Endothelial cell of umbilical vein (primary cell): ENCODE measurements at regions of chr6 and their contacts with region 1.

Region 1: DNA sequence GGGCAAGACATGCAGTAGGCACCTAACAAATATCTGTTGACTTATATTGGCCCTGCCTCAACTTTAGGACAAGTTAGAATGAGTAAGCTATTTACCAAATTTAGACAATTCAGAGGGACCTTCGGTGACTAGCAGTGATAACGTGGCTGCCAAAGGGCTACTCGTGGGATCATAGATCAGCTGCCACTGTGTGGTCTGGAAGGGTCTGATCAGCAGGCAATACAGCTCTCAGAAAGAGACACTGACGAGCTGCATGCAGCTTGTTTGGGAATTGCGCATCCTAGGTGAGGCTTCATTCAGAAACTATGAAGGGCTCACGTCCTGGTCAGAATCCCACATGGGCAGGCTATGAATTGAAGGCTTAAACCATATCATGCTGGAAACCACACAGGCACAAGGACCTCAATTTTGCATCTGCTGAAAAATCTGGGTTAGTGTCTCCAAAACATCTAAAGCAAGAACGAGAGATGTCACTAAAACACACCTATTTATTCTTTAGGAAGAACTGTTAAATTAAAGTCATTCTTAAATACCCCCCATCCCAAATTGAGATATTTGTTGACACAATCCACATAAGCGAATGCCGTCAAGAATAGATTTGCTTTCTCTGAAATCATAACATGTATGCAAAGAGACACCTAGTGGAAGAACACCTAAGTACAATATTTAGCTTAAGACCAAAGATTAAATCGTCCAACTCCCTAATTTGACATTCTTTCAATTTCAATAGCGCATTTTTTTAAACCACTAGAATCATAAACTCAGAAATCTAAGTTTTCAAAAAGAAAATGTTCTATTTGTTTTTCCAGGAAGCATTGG is 79.6 kb downstream of the IPCEF1 start:
- DNase-seq: peak; percentile 42
- H3K4me3 ChIP-seq: no peak overlapping the region
- H3K27ac ChIP-seq: no peak overlapping the region
- H3K4me1 ChIP-seq: no peaks in the 10 kb centered on the region
- H3K27me3 ChIP-seq: no peaks in the 10 kb centered on the region
- CTCF ChIP-seq: peak; percentile 21 to 37
- POLR2A ChIP-seq: no peak

Region 2: DNA sequence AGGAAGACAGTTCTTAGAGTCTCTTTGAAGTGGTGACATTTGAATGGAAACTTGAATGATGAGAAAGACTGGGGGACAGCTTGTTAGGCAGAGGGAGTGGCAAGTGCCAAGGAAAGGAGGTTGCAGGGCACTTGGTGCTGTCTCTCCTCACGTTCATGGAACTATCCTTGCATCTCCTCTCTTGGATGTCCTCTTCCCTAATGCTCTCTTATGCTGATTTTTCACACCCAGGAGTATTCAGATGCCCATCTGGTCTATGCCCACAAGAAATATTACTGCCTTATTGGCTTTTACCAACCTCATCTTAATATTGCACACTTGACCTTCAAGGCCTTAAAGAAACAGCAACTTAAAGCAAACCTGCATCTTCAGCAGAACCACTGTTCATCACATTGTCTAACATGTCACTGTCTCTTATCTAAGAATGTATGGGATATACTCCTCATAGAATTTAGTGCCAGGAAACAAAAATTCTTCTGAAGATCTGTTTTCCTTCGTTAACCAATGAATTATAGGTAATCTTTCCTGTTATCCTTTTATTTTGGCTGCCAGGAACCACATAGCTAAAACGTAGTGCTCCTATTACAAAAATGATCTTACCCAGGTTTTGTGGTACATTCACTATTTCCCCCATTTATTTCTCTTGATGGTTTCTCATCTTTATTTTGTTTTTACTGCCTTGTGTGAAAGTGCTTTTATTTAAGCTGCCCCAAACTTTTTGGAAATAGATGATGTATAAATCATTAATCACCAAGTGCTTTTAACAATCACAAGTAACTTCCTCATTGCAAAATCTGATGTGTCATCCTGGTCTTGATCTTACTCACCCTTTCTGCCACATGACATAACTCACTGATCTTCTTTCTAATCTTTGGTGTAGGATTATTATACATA is 1158.8 kb before region 1 on chr6:
- CTCF ChIA-PET with region 1: no interaction called
- POLR2A ChIA-PET with region 1: no interaction called
- dilution Hi-C with region 1: no loop called
- intact Hi-C with region 1: no loop called
- DNase-seq: no peak
- H3K4me3 ChIP-seq: no peak overlapping the region
- H3K27ac ChIP-seq: no peak overlapping the region
- H3K4me1 ChIP-seq: no peaks in the 10 kb centered on the region
- H3K27me3 ChIP-seq: no peaks in the 10 kb centered on the region
- CTCF ChIP-seq: no peak
- POLR2A ChIP-seq: no peak

Region 3: DNA sequence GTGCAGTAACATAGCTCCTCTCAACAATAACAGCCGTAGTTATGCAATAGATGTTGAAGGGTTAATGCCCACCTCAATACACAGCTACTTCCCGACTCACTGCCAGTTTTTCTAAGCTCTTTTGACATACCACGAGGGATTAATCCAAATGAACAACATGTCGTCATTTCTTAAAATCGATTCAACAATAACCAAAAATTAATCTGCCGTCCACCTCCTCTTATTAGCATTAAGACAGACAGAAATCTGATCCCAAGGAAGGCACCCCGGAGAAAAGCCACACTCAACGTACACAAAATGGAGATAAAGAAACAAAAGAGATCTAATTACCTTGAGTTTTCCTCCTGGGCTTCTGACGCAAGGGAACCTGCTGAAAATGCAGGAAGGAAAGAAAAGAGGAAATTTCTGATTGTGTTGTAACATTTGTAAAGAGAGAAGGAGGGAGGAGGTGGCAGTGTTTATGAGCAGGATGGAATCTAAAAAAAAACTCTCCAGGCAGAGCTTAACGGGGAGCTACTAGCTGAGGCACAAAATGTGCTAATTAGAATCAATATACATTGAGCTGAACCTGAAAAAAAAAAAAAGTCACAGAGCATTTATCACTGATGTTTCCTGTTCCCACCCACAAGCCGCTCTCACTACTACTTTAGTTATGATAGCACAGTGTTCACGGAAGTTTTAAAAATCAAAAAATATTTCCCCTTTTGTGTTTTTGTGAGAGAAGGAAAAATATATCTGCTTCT is 29.7 kb before region 1 on chr6:
- CTCF ChIA-PET with region 1: interaction called, 11 read pairs
- POLR2A ChIA-PET with region 1: no interaction called
- dilution Hi-C with region 1: no loop called
- intact Hi-C with region 1: no loop called
- DNase-seq: peak; percentile 44
- H3K4me3 ChIP-seq: peak overlapping the region in 2 of 3 experiments; percentile 21 to 45
- H3K27ac ChIP-seq: no peak overlapping the region
- H3K4me1 ChIP-seq: peaks cover 4% of the 10 kb centered on the region
- H3K27me3 ChIP-seq: peaks cover 0 to 3% of the 10 kb centered on the region in 2 experiments
- CTCF ChIP-seq: no peak
- POLR2A ChIP-seq: no peak

Region 4: DNA sequence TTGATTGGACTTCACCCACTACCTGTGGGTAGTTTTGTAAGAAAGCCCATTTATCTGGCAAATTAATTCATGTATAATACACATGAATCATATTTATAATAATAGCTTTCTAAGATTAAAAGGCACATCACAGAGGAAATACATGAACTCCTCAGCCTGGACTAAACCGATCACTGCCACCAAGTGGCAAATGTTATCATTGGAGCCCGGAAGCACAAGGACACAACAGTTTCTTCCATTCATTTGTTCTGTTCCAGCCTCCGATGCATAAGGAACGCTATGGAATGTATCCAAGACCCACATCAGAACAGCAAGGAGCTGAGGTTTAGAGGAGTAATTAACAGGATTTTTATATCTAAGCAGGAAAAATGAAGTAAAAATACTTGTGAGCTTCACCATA is 93.5 kb after region 1 on chr6:
- CTCF ChIA-PET with region 1: interaction called, 14 read pairs
- POLR2A ChIA-PET with region 1: no interaction called
- dilution Hi-C with region 1: no loop called
- intact Hi-C with region 1: loop called (anchors 5 kb)
- DNase-seq: peak; percentile 59
- H3K4me3 ChIP-seq: no peak overlapping the region
- H3K27ac ChIP-seq: no peak overlapping the region
- H3K4me1 ChIP-seq: peaks cover 9% of the 10 kb centered on the region
- H3K27me3 ChIP-seq: no peaks in the 10 kb centered on the region
- CTCF ChIP-seq: peak; percentile 8 to 36
- POLR2A ChIP-seq: no peak